ENCODE measurements at regions of chr19 and their contacts with region 1.

Region 1: GRCh38 chr19:11987405-11988281 is 22.8 kb downstream of the ZNF763 start:
- DNase-seq: peak; percentile 97
- ATAC-seq: peak; percentile 96
- H3K4me3 Mint-ChIP-seq: peak overlapping the region; percentile 99
- H3K27ac Mint-ChIP-seq: peak overlapping the region; percentile 98
- H3K4me1 Mint-ChIP-seq: peaks cover 27% of the 10 kb centered on the region
- H3K27me3 Mint-ChIP-seq: no peaks in the 10 kb centered on the region

Region 2: DNA sequence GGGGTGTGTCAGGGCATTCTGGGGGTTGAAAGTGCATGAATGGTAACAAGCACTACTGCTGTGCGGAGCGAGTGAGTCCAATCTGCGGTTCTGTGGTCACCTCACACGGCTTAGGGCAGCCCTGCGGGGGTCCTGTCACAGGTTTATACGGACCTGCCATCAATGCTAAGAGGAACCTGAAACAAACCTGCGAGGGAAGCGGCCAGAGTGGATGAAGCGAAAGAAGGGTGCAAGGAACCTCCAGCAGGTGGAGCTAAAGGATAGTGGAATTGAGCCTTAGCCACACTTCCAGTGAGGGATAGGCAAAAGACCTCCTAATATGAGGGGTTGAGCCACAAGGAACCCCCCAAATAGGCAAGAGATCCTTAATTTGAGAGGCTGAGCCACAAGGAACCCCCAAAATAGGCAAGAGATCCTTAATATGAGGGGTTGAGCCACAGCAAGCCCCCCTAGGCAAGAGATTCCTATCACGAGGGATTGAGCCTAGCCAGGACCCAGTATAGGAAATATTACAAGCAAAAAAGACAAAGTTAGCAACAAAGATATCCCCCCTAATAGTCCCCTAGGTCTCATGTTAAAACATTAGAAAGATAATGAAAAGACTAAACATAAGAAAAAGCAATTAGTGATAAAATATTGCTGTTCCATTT is 106.4 kb before region 1 on chr19:
- CTCF ChIA-PET with region 1: interaction called, 27 read pairs
- POLR2A ChIA-PET with region 1: interaction called, 3 read pairs
- DNase-seq: peak; percentile 77
- ATAC-seq: peak; percentile 82
- H3K4me3 Mint-ChIP-seq: no peak overlapping the region
- H3K27ac Mint-ChIP-seq: no peak overlapping the region
- H3K4me1 Mint-ChIP-seq: no peaks in the 10 kb centered on the region
- H3K27me3 Mint-ChIP-seq: peaks cover 6% of the 10 kb centered on the region

Region 3: DNA sequence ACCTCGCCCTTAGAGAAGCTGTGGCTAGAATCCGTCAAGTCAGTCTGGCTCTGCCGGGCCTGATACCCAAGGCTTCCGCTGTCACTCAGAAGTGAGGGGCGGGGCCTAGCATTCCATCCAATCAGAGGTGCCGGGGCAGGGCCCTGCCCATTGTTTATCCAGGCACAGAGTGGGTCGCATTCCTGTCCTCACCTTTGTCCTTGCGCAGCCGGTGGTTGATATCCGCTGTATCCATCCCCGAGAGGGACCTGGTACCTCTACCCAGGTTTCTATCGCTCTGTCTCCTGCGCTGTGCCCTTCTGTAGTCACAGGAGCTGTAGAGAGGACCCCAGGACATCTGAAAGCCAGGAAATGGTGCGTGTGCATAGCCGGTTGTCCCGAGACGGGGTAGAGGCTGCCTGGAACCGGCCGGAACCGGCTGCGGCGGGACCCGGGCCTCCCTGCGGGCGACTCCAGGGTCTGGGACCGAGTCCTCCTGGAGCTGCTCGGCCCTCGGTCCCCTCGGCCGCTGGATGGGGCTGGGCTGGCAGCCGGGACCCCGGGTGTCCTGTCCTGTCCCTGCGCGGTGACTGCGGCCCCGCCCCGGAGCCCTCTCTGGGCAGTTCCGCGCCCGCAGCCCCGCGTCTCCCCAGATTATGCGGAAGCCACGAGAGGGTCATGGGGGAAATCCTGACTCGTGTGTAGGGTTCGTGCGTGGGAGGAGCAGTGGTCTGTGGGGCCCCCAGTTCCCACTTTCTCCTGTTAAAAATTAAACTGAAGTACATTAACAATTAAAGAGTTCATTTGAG is 22.6 kb before region 1 on chr19 and contains the start of gene ZNF763:
- CTCF ChIA-PET with region 1: interaction called, 83 read pairs
- POLR2A ChIA-PET with region 1: interaction called, 25 read pairs
- DNase-seq: peak; percentile 94
- ATAC-seq: peak; percentile 97
- H3K4me3 Mint-ChIP-seq: peak within 1 kb of the TSS; percentile 88
- H3K27ac Mint-ChIP-seq: peak within 1 kb of the TSS; percentile 88
- H3K4me1 Mint-ChIP-seq: peaks cover 27% of the 10 kb centered on the region
- H3K27me3 Mint-ChIP-seq: no peaks in the 10 kb centered on the region
- total RNA-seq, gene ZNF763: 2.0 to 2.3 TPM

Region 4: DNA sequence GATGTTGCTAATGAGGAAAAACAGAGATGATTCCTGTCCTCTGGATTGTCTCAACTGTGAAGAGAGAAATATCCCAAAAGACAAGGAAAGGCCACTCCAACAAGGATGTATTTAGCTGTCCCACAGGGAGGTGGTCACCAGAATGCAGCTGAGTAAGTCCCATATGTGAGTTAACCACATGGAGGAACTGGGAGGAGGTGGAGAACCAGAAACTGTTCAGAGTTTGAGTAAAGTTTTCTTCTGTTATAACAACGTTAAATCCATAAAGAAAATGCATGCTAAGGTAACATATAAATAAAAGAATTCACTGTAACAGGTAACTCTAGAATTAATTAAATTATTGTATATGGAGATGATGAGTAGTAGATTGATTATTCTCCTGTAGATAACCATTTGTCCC is 17.5 kb before region 1 on chr19:
- CTCF ChIA-PET with region 1: interaction called, 83 read pairs
- POLR2A ChIA-PET with region 1: interaction called, 25 read pairs
- DNase-seq: no peak
- ATAC-seq: no peak
- H3K4me3 Mint-ChIP-seq: no peak overlapping the region
- H3K27ac Mint-ChIP-seq: no peak overlapping the region
- H3K4me1 Mint-ChIP-seq: peaks cover 9% of the 10 kb centered on the region
- H3K27me3 Mint-ChIP-seq: no peaks in the 10 kb centered on the region

Region 5: GRCh38 chr19:12000152-12000981 is 12.7 kb after region 1 on chr19:
- CTCF ChIA-PET with region 1: interaction called, 11 read pairs
- POLR2A ChIA-PET with region 1: interaction called, 8 read pairs
- DNase-seq: no peak
- ATAC-seq: peak; percentile 63
- H3K4me3 Mint-ChIP-seq: no peak overlapping the region
- H3K27ac Mint-ChIP-seq: peak overlapping the region; percentile 67
- H3K4me1 Mint-ChIP-seq: peaks cover 18% of the 10 kb centered on the region
- H3K27me3 Mint-ChIP-seq: no peaks in the 10 kb centered on the region

Region 6: GRCh38 chr19:12064590-12065538 is 77.2 kb after region 1 on chr19 and contains the start of gene ZNF844:
- CTCF ChIA-PET with region 1: interaction called, 17 read pairs
- POLR2A ChIA-PET with region 1: no interaction called
- DNase-seq: peak; percentile 78
- ATAC-seq: peak; percentile 79
- H3K4me3 Mint-ChIP-seq: peak within 1 kb of the TSS; percentile 79
- H3K27ac Mint-ChIP-seq: peak within 1 kb of the TSS; percentile 82
- H3K4me1 Mint-ChIP-seq: peaks cover 3% of the 10 kb centered on the region
- H3K27me3 Mint-ChIP-seq: no peaks in the 10 kb centered on the region
- total RNA-seq, gene ZNF844: 1.7 to 2.4 TPM